Thyroid gland (tissue), 4 donors: ENCODE measurements at regions of chrX and their contacts with region 1.

Region 1: DNA sequence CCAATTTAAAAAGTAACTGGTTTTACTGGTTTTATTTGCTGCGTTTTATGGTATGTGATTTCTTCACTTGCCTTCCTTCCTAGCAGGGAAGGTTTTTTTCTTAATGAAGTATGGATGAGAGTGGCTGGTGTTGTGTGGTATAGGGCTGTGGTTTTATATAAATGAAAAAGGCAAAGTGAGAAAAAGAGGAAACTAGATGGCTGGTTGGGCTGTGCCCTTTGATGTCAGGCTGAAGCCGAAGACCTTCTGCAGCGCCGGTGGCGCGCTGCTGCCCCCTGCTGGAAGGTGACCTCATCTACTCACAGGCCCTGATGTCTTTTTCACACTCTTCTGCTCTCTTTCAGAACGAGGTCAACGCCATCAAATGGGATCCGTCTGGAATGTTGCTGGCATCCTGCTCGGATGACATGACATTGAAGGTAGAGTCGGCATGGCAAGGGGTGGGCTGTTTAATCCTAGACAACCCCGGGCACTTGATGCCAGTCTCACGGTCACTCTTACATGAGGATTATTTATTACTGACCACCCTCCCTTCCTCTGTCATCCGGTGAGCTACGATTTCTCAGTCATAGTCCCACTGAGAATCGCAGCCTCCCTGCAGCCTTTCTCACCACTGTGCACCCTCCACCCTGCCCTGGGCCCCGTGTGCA is 56.6 kb downstream of the GPR143 start:
- DNase-seq: peak; percentile 68 to 76
- H3K4me3 ChIP-seq: no peak overlapping the region
- H3K27ac ChIP-seq: no peak overlapping the region
- H3K4me1 ChIP-seq: peaks cover 0 to 3% of the 10 kb centered on the region in 2 donors
- H3K27me3 ChIP-seq: no peaks in the 10 kb centered on the region
- CTCF ChIP-seq: peak; percentile 33 to 78 (median 72)
- POLR2A ChIP-seq: no peak

Region 2: DNA sequence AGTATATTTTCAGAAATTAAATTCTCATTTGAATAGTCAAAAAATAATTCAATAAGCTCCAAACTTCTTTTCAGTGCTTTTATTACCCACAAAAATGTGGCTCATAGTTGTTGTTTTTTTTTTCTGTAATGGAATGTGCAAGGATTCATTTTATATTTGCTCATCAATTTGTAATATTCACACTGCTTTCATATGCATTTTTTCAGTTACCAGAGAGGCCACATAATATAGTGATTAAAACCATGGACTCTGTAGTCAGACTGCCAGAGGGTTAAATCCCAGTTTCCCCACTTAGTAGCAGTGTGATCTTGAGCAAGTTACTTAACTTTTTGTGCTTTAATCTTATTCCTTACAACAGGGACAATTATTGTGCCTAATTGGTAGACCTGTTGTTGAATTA is 739.7 kb before region 1 on chrX:
- intact Hi-C with region 1: loop called (anchors 5 kb)
- DNase-seq: no peak
- H3K4me3 ChIP-seq: no peak overlapping the region
- H3K27ac ChIP-seq: no peak overlapping the region
- H3K4me1 ChIP-seq: no peaks in the 10 kb centered on the region
- H3K27me3 ChIP-seq: no peaks in the 10 kb centered on the region
- CTCF ChIP-seq: no peak
- POLR2A ChIP-seq: no peak

Region 3: DNA sequence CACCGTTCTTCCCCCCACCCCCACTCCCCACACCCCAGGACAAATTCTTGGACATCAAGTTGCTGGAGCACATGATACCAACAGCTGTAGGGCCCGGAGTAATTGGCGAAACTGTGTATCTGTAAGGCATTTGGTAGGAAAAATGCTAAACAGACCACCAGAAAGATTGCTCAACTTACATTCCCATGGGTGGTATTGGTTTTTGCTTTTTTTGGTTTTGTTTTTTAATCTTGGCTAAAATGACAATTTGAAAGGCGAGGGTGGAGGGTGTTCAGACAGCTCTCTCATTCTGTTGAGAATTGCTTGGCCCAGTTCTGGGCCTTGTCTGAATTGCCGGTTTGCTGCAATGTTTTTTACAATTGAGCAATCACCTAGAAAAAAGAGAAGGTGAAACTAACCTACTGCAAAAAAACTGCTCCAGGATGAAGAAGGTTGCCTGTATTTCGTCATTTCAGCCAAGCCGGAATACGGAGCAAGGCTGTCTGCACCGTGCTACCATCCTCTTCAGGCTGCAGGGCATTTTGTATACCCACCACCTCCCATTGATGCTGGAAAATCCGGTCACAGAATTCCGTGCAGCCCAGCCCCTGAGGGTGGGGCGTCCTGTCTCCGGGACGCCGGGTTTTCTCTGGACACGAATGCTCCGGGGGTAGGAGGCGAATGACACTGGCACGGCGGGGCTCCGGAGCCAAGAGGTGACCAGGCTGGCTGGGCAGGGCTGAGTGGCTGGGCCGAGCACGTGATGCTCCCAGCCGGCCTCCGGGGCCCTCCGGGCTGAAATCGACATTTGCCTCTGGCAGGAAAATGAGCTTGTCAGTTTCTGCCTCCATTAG is 447.4 kb after region 1 on chrX and contains the start of gene CLCN4:
- intact Hi-C with region 1: no loop called
- DNase-seq: peak; percentile 83 to 84
- H3K4me3 ChIP-seq: peak within 1 kb of the TSS in 2 of 3 donors; percentile 14 to 17
- H3K27ac ChIP-seq: peak within 1 kb of the TSS; percentile 66 to 90 (median 73)
- H3K4me1 ChIP-seq: peaks cover 0 to 8% of the 10 kb centered on the region in 2 donors
- H3K27me3 ChIP-seq: peaks cover 5% of the 10 kb centered on the region
- CTCF ChIP-seq: no peak
- POLR2A ChIP-seq: peak in 1 of 2 donors; percentile 69
- total RNA-seq, gene CLCN4: 7.1 to 19.1 (median 15.9) TPM